Endothelial cell of umbilical vein (primary cell): ENCODE measurements at regions of chr14 and their contacts with region 1.

Region 1: GRCh38 chr14:99628832-99629618 is 15.9 kb upstream of the HHIPL1 start:
- DNase-seq: peak; percentile 69
- H3K4me3 ChIP-seq: no peak overlapping the region
- H3K27ac ChIP-seq: no peak overlapping the region
- H3K4me1 ChIP-seq: no peaks in the 10 kb centered on the region
- H3K27me3 ChIP-seq: no peaks in the 10 kb centered on the region
- CTCF ChIP-seq: peak; percentile 97 to 99
- POLR2A ChIP-seq: no peak

Region 2: GRCh38 chr14:99518441-99519346 is 110.3 kb before region 1 on chr14:
- CTCF ChIA-PET with region 1: interaction called, 52 read pairs
- POLR2A ChIA-PET with region 1: no interaction called
- dilution Hi-C with region 1: no loop called
- intact Hi-C with region 1: loop called (anchors 1 kb)
- DNase-seq: peak; percentile 55
- H3K4me3 ChIP-seq: no peak overlapping the region
- H3K27ac ChIP-seq: no peak overlapping the region
- H3K4me1 ChIP-seq: peaks cover 9% of the 10 kb centered on the region
- H3K27me3 ChIP-seq: no peaks in the 10 kb centered on the region
- CTCF ChIP-seq: peak; percentile 94 to 97
- POLR2A ChIP-seq: no peak

Region 3: DNA sequence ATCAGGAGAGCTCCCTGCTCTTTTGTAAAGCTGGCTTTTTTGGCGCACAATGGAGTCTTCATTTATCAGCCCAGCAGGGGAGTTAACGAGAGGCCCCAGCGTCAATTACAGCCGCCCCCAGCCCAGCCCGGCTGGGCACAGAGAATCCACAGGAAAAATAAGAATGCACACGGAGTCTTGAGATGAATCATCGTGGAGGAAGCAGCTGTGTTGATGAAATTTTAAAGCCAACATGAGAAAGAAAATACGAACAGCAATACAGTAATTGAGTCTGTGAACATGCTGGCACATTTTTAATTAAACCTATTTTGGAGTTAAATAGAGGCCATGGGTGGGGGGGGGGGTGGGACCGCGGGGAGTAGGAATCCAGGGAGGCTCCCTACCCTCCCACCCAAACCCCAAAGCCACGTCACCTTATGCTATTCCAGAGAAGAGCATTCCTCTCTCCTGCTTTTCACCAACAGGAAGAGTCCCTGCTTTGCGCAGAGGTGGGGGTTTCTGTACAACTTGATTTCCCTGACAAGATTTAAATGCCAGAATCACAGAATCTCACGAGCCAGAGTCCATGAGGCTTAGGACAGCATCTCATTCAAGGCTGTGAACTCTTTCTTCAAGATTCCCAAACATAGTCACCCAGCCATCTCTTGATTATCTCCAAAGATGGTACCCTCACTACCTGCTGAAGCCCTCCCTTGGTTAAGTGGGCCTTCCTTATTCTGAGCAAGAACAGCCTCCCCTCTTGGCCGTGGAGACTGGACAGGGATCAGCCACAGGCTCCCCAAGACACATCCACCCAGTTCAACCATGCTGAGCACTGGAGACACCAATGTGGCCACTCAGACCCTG is 97.6 kb before region 1 on chr14:
- CTCF ChIA-PET with region 1: interaction called, 52 read pairs
- POLR2A ChIA-PET with region 1: no interaction called
- dilution Hi-C with region 1: no loop called
- intact Hi-C with region 1: loop called (anchors 2 kb)
- DNase-seq: peak; percentile 95
- H3K4me3 ChIP-seq: peak overlapping the region in 1 of 3 experiments; percentile 20
- H3K27ac ChIP-seq: peak overlapping the region; percentile 84
- H3K4me1 ChIP-seq: peaks cover 27% of the 10 kb centered on the region
- H3K27me3 ChIP-seq: no peaks in the 10 kb centered on the region
- CTCF ChIP-seq: no peak
- POLR2A ChIP-seq: peak; percentile 23

Region 4: GRCh38 chr14:99575043-99576023 is 53.7 kb before region 1 on chr14:
- CTCF ChIA-PET with region 1: interaction called, 15 read pairs
- POLR2A ChIA-PET with region 1: no interaction called
- dilution Hi-C with region 1: no loop called
- intact Hi-C with region 1: no loop called
- DNase-seq: no peak
- H3K4me3 ChIP-seq: no peak overlapping the region
- H3K27ac ChIP-seq: no peak overlapping the region
- H3K4me1 ChIP-seq: peaks cover 4% of the 10 kb centered on the region
- H3K27me3 ChIP-seq: no peaks in the 10 kb centered on the region
- CTCF ChIP-seq: peak in 1 of 2 donors; percentile 20
- POLR2A ChIP-seq: no peak

Region 5: GRCh38 chr14:99604283-99604765 is 24.7 kb before region 1 on chr14:
- CTCF ChIA-PET with region 1: interaction called, 18 read pairs
- POLR2A ChIA-PET with region 1: interaction called, 9 read pairs
- dilution Hi-C with region 1: no loop called
- intact Hi-C with region 1: loop called (anchors 1 kb)
- DNase-seq: peak; percentile 92
- H3K4me3 ChIP-seq: peak overlapping the region; percentile 45 to 81 (median 78)
- H3K27ac ChIP-seq: peak overlapping the region; percentile 60
- H3K4me1 ChIP-seq: peaks cover 20% of the 10 kb centered on the region
- H3K27me3 ChIP-seq: peaks cover 0 to 5% of the 10 kb centered on the region in 2 experiments
- CTCF ChIP-seq: no peak
- POLR2A ChIP-seq: peak; percentile 48